Naive thymus-derived CD4-positive, alpha-beta T cell (primary cell): ENCODE measurements at regions of chr6 and their contacts with region 1.

Region 1: DNA sequence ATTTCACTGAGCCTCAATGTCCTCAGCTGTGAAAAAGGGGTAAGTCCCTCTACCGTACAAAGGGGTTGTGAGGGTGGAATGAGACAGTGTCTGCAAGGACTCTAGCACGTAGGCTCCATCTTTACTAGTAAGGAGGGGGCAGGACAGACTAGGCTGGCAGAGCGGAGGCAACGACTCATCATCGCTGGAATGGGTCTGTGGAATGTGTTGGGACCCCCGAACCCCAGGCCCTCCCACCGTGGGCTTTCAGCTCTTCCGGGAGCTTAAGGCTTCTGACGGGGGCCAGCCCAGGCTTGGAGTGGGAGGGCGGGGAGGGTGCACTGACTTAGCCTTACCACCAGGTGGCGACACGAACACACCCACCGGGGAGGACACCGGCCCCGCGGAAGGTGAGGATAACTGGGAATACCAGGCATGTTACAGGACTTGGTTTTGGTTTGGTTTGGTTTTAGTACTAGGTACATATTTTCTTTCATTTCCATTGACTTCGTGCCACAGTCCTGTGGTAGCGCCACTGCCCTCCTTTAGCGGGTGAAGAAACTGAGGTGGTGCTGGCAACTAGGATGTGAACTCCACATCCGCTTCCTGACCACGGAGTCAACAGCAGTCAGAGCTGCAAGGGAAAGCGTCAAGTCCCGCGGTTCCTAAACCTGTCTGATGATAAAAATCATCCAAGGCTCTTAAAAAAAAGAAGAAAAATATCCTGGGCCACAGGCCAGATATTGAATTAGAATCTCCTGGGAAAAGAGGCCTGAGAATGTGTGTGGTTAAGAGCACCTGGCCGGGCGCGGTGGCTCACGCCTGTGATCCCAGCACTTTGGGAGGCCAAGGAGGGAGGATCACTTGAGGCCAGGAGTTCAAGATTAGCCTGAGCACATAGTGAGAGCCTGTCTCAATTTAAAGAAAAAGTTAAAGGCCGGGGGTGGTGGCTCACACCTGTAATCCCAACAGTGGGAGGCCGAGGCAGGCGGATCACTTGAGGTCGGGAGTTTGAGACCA is 10.3 kb upstream of the TULP1 start:
- DNase-seq: peak; percentile 61 to 82 (median 74)
- ATAC-seq: peak; percentile 89
- H3K4me3 ChIP-seq: no peak overlapping the region
- H3K4me3 Mint-ChIP-seq: peak overlapping the region; percentile 56 to 84 (median 76)
- H3K27ac ChIP-seq: peak overlapping the region; percentile 53
- H3K27ac Mint-ChIP-seq: peak overlapping the region; percentile 53 to 91 (median 77)
- H3K4me1 ChIP-seq: peaks cover 9 to 19% of the 10 kb centered on the region in 2 donors
- H3K4me1 Mint-ChIP-seq: peaks cover 9 to 32% (median 26%) of the 10 kb centered on the region in 7 donors
- H3K27me3 ChIP-seq: no peaks in the 10 kb centered on the region
- H3K27me3 Mint-ChIP-seq: peaks cover 0 to 2% (median 0%) of the 10 kb centered on the region in 5 donors

Region 2: DNA sequence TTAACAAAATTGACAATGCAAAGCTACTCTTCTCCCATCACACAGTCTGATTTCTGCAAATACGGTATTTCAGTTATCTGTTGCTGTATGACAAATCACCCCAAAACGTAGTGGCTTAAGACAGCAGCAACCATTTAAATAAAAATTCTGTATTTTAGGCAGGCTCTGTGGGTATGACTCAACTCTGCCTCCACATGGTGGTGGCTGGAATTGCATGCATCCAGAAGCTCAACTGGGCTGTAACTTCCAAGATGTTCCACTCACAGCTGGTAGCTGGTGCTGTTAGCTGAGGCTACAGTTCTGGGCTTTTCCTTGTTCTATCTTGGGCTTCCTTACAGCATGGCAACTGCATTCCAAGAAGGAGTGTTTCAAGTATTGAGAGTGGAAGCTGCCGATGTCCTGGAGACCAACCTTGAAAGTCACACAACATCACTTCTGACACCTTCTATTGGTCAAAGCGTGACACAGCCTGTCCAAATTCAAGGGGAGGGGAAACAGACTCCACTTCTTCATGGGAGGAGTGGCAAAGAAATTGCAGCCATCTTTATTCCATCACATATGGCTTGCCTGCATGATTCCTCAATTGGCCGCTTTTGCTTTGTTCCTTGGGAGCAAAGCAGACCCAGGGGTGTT is 29.4 kb after region 1 on chr6:
- CTCF ChIA-PET with region 1: interaction called, 15 read pairs
- POLR2A ChIA-PET with region 1: interaction called, 5 read pairs
- intact Hi-C with region 1: loop called (anchors 1 kb)
- DNase-seq: peak; percentile 36 to 69 (median 60)
- ATAC-seq: peak; percentile 84
- H3K4me3 ChIP-seq: no peak overlapping the region
- H3K4me3 Mint-ChIP-seq: no peak overlapping the region
- H3K27ac ChIP-seq: no peak overlapping the region
- H3K27ac Mint-ChIP-seq: peak overlapping the region in 1 of 9 donors; percentile 67
- H3K4me1 ChIP-seq: no peaks in the 10 kb centered on the region
- H3K4me1 Mint-ChIP-seq: peaks cover 0 to 8% (median 6%) of the 10 kb centered on the region in 7 donors
- H3K27me3 ChIP-seq: no peaks in the 10 kb centered on the region
- H3K27me3 Mint-ChIP-seq: peaks cover 0 to 17% (median 0%) of the 10 kb centered on the region in 5 donors

Region 3: GRCh38 chr6:35583893-35584688 is 61.1 kb after region 1 on chr6:
- CTCF ChIA-PET with region 1: interaction called, 4 read pairs
- POLR2A ChIA-PET with region 1: interaction called, 7 read pairs
- intact Hi-C with region 1: loop called in 1 of 2 experiments (anchors 1 kb)
- DNase-seq: peak; percentile 43 to 81 (median 75)
- ATAC-seq: peak; percentile 84
- H3K4me3 ChIP-seq: no peak overlapping the region
- H3K4me3 Mint-ChIP-seq: peak overlapping the region in 8 of 10 donors; percentile 16 to 62 (median 46)
- H3K27ac ChIP-seq: peak overlapping the region; percentile 16
- H3K27ac Mint-ChIP-seq: peak overlapping the region; percentile 38 to 94 (median 92)
- H3K4me1 ChIP-seq: peaks cover 7 to 57% of the 10 kb centered on the region in 2 donors
- H3K4me1 Mint-ChIP-seq: peaks cover 31 to 92% (median 79%) of the 10 kb centered on the region in 7 donors
- H3K27me3 ChIP-seq: no peaks in the 10 kb centered on the region
- H3K27me3 Mint-ChIP-seq: no peaks in the 10 kb centered on the region

Region 4: GRCh38 chr6:35737413-35738211 is 214.7 kb after region 1 on chr6:
- CTCF ChIA-PET with region 1: interaction called, 64 read pairs
- POLR2A ChIA-PET with region 1: no interaction called
- intact Hi-C with region 1: loop called (anchors 1 kb)
- DNase-seq: peak in 7 of 9 donors; percentile 60 to 80 (median 73)
- ATAC-seq: peak; percentile 83
- H3K4me3 ChIP-seq: no peak overlapping the region
- H3K4me3 Mint-ChIP-seq: peak overlapping the region in 8 of 10 donors; percentile 51 to 75 (median 62)
- H3K27ac ChIP-seq: peak overlapping the region; percentile 22
- H3K27ac Mint-ChIP-seq: peak overlapping the region; percentile 28 to 98 (median 90)
- H3K4me1 ChIP-seq: peaks cover 31 to 51% of the 10 kb centered on the region in 2 donors
- H3K4me1 Mint-ChIP-seq: peaks cover 21 to 50% (median 42%) of the 10 kb centered on the region in 7 donors
- H3K27me3 ChIP-seq: no peaks in the 10 kb centered on the region
- H3K27me3 Mint-ChIP-seq: no peaks in the 10 kb centered on the region